CD4-positive, alpha-beta memory T cell (primary cell): ENCODE measurements at regions of chr7 and their contacts with region 1.

Region 1: GRCh38 chr7:30740424-30741181 is 11.3 kb upstream of the INMT start:
- DNase-seq: peak; percentile 60 to 77 (median 67)
- H3K4me3 ChIP-seq: no peak overlapping the region
- H3K4me3 Mint-ChIP-seq: peak overlapping the region in 1 of 8 donors; percentile 50
- H3K27ac ChIP-seq: no peak overlapping the region
- H3K27ac Mint-ChIP-seq: peak overlapping the region in 5 of 7 donors; percentile 30 to 60 (median 53)
- H3K4me1 ChIP-seq: peaks cover 53% of the 10 kb centered on the region
- H3K4me1 Mint-ChIP-seq: peaks cover 31 to 50% (median 39%) of the 10 kb centered on the region in 4 donors
- H3K27me3 ChIP-seq: no peaks in the 10 kb centered on the region
- H3K27me3 Mint-ChIP-seq: no peaks in the 10 kb centered on the region

Region 2: DNA sequence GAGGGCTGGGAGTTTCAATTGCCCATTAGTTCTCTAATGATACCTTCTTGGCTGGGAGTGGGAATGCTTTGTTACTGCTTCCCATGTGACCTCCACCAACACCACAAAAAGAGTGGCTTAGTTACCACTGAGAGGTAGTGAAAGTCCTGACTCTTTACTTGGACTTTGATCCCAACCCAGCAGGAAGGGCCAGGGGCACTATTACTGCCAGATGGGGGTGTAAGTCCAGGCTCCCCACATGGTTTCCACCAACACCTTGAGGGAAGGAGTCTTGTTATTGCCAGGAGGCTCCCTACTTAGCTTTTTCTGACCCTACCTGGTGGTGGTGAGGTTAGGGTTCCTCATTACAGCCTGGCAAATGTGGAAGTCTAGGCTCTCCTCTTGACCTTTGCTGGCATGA is 247.4 kb before region 1 on chr7:
- CTCF ChIA-PET with region 1: no interaction called
- POLR2A ChIA-PET with region 1: no interaction called
- intact Hi-C with region 1: no loop called
- DNase-seq: no peak
- H3K4me3 ChIP-seq: no peak overlapping the region
- H3K4me3 Mint-ChIP-seq: no peak overlapping the region
- H3K27ac ChIP-seq: no peak overlapping the region
- H3K27ac Mint-ChIP-seq: no peak overlapping the region
- H3K4me1 ChIP-seq: no peaks in the 10 kb centered on the region
- H3K4me1 Mint-ChIP-seq: no peaks in the 10 kb centered on the region
- H3K27me3 ChIP-seq: no peaks in the 10 kb centered on the region
- H3K27me3 Mint-ChIP-seq: peaks cover 1 to 3% of the 10 kb centered on the region in 2 donors

Region 3: GRCh38 chr7:30510124-30511075 is 230.2 kb before region 1 on chr7:
- CTCF ChIA-PET with region 1: interaction called, 16 read pairs
- POLR2A ChIA-PET with region 1: no interaction called
- intact Hi-C with region 1: loop called (anchors 1 kb)
- DNase-seq: peak; percentile 23 to 37 (median 29)
- H3K4me3 ChIP-seq: no peak overlapping the region
- H3K4me3 Mint-ChIP-seq: no peak overlapping the region
- H3K27ac ChIP-seq: no peak overlapping the region
- H3K27ac Mint-ChIP-seq: no peak overlapping the region
- H3K4me1 ChIP-seq: peaks cover 4% of the 10 kb centered on the region
- H3K4me1 Mint-ChIP-seq: peaks cover 0 to 5% (median 2%) of the 10 kb centered on the region in 4 donors
- H3K27me3 ChIP-seq: no peaks in the 10 kb centered on the region
- H3K27me3 Mint-ChIP-seq: no peaks in the 10 kb centered on the region

Region 4: DNA sequence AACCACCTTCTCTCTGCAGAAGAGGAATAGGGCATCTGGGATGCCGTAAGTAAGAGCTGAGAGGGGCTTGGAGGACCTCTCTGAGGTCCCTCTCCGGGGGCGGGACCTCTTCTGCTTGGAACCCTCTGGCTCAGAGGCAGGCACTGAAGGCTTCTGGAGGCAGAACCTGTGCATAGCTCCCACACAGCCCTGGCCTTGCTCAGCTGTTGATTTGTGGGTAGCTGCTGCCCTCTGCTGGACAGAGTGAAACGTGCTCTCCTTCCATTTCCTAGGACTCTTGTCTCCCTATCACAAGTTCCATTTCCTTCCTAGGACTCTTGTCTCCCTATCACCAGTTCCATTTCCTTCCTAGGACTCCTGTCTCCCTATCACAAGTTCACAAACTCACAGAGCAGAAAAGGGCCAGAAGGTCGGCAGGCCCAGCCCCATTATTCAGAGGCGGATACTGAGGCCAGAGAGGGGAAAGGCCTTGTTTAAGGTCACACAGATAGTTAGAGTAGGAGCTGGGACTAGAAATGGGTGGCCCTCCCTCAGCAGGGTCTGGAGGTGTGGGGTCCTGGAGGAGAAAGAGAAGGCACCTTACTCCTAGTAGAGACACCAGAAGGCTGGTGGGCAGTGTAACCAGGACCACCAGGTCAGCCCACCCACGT is 176.2 kb before region 1 on chr7:
- CTCF ChIA-PET with region 1: interaction called, 18 read pairs
- POLR2A ChIA-PET with region 1: no interaction called
- intact Hi-C with region 1: no loop called
- DNase-seq: peak; percentile 64 to 73 (median 67)
- H3K4me3 ChIP-seq: no peak overlapping the region
- H3K4me3 Mint-ChIP-seq: no peak overlapping the region
- H3K27ac ChIP-seq: no peak overlapping the region
- H3K27ac Mint-ChIP-seq: peak overlapping the region in 3 of 7 donors; percentile 30 to 84 (median 50)
- H3K4me1 ChIP-seq: no peaks in the 10 kb centered on the region
- H3K4me1 Mint-ChIP-seq: no peaks in the 10 kb centered on the region
- H3K27me3 ChIP-seq: no peaks in the 10 kb centered on the region
- H3K27me3 Mint-ChIP-seq: no peaks in the 10 kb centered on the region

Region 5: GRCh38 chr7:30625283-30625682 is 115.3 kb before region 1 on chr7:
- CTCF ChIA-PET with region 1: interaction called, 22 read pairs
- POLR2A ChIA-PET with region 1: interaction called, 3 read pairs
- intact Hi-C with region 1: loop called (anchors 5 kb)
- DNase-seq: no peak
- H3K4me3 ChIP-seq: no peak overlapping the region
- H3K4me3 Mint-ChIP-seq: no peak overlapping the region
- H3K27ac ChIP-seq: no peak overlapping the region
- H3K27ac Mint-ChIP-seq: peak overlapping the region in 3 of 7 donors; percentile 2 to 54 (median 3)
- H3K4me1 ChIP-seq: no peaks in the 10 kb centered on the region
- H3K4me1 Mint-ChIP-seq: peaks cover 0 to 3% (median under 1%) of the 10 kb centered on the region in 4 donors
- H3K27me3 ChIP-seq: no peaks in the 10 kb centered on the region
- H3K27me3 Mint-ChIP-seq: no peaks in the 10 kb centered on the region

Region 6: GRCh38 chr7:30702200-30702599 is 38.4 kb before region 1 on chr7:
- CTCF ChIA-PET with region 1: interaction called, 341 read pairs
- POLR2A ChIA-PET with region 1: interaction called, 38 read pairs
- intact Hi-C with region 1: loop called (anchors 1 kb)
- DNase-seq: peak in 3 of 5 donors; percentile 25 to 44 (median 28)
- H3K4me3 ChIP-seq: no peak overlapping the region
- H3K4me3 Mint-ChIP-seq: no peak overlapping the region
- H3K27ac ChIP-seq: no peak overlapping the region
- H3K27ac Mint-ChIP-seq: peak overlapping the region in 1 of 7 donors; percentile 9
- H3K4me1 ChIP-seq: no peaks in the 10 kb centered on the region
- H3K4me1 Mint-ChIP-seq: peaks cover 7 to 15% (median 10%) of the 10 kb centered on the region in 4 donors
- H3K27me3 ChIP-seq: no peaks in the 10 kb centered on the region
- H3K27me3 Mint-ChIP-seq: no peaks in the 10 kb centered on the region

Region 7: DNA sequence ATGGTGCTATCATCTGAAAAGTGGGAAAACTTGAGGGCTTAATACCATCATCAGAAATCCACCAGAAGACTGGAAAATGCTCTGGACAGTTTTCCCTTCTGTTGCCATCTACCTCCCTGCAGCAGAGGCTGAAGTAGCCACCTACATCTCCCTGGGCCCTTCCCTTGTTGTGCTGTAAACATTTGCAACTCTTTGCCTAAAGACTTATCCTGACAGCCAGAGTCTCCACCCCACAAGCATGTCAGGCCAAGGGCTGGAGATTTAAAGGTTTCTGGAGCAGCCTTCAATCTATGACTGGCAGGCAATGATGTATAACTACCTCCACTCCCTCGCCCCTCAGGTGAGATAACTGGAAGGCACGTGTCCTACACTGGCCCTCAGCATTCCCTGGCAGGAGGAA is 18.4 kb before region 1 on chr7:
- CTCF ChIA-PET with region 1: interaction called, 240 read pairs
- POLR2A ChIA-PET with region 1: interaction called, 139 read pairs
- intact Hi-C with region 1: loop called (anchors 1 kb)
- DNase-seq: no peak
- H3K4me3 ChIP-seq: no peak overlapping the region
- H3K4me3 Mint-ChIP-seq: no peak overlapping the region
- H3K27ac ChIP-seq: no peak overlapping the region
- H3K27ac Mint-ChIP-seq: peak overlapping the region in 1 of 7 donors; percentile 52
- H3K4me1 ChIP-seq: peaks cover 20% of the 10 kb centered on the region
- H3K4me1 Mint-ChIP-seq: peaks cover 12 to 29% (median 21%) of the 10 kb centered on the region in 4 donors
- H3K27me3 ChIP-seq: no peaks in the 10 kb centered on the region
- H3K27me3 Mint-ChIP-seq: no peaks in the 10 kb centered on the region

Region 8: DNA sequence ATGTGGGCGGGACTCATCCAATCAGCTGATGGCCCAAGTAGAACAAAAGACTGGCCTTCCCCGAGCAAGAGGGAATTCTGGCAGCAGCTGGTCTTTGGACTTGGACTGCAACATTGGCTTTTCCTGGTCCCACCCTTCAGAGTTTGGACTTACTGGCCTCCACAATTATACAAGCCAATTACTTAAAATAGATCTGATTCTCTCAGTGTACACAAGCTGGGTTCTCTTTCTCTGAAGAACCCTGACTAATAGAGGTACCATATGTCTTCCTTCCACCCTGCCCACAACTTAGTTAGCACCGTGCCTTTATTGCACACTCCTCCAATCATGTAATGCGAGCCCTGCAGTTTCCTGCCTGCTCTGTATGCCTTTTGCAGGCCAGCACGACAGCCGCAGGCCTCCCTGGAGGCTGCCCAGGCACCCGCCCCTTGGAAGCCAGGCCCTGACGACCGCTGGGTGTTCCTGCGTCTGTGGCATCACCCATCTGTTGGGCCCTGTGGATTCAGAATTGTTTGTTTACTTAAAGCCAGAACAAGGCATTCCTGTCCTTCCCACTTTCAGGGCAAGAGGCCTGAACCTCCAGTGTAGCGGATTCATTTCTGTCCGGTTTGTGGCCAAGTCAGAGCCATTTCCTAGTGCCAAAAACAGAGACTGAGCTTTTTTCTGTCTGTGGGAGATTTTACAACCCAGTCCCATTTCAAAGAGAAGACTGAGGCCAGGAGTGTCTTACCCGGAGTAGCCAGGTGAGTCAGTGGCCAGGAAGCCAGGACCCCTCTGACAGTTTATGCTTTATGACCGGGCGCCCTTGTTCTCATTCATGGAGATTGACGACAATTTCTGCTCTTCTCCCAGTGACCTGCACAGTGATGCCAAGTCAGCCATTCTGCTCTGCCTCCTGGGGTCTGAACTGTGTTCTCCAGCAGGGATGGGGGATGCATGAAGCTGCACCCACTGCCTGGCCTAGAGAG is 10.4 kb after region 1 on chr7:
- CTCF ChIA-PET with region 1: interaction called, 30 read pairs
- POLR2A ChIA-PET with region 1: no interaction called
- intact Hi-C with region 1: no loop called
- DNase-seq: no peak
- H3K4me3 ChIP-seq: no peak overlapping the region
- H3K4me3 Mint-ChIP-seq: no peak overlapping the region
- H3K27ac ChIP-seq: no peak overlapping the region
- H3K27ac Mint-ChIP-seq: peak overlapping the region in 1 of 7 donors; percentile 55
- H3K4me1 ChIP-seq: no peaks in the 10 kb centered on the region
- H3K4me1 Mint-ChIP-seq: no peaks in the 10 kb centered on the region
- H3K27me3 ChIP-seq: no peaks in the 10 kb centered on the region
- H3K27me3 Mint-ChIP-seq: peaks cover 0 to 4% of the 10 kb centered on the region in 2 donors